T-cell (primary cell): ENCODE measurements at regions of chr5 and their contacts with region 1.

Region 1: DNA sequence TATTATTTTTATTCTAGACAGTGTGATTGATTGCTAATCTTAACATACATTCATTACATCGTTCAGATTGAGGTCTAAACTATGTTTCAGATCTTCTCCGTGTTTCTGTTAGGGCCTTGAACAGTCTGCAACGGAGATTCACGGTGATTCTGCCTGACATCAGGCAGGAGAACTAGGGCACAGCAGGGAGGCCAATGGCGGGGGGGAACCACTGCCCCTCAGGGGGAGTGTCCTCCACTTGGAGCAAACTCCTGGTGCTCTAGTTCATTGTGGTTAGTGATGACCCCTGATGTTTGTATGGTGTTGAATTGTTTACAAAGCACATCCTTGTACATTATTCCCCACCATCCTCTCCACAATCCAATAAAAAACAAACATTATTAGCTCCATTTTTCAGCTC is 173.5 kb downstream of the ZNF608 start:
- DNase-seq: no peak
- ATAC-seq: no peak
- H3K4me3 ChIP-seq: no peak overlapping the region
- H3K4me3 Mint-ChIP-seq: no peak overlapping the region
- H3K27ac ChIP-seq: no peak overlapping the region
- H3K27ac Mint-ChIP-seq: no peak overlapping the region
- H3K4me1 ChIP-seq: no peaks in the 10 kb centered on the region
- H3K4me1 Mint-ChIP-seq: no peaks in the 10 kb centered on the region
- H3K27me3 ChIP-seq: no peaks in the 10 kb centered on the region
- H3K27me3 Mint-ChIP-seq: peaks cover 0 to 5% of the 10 kb centered on the region in 2 donors

Region 2: DNA sequence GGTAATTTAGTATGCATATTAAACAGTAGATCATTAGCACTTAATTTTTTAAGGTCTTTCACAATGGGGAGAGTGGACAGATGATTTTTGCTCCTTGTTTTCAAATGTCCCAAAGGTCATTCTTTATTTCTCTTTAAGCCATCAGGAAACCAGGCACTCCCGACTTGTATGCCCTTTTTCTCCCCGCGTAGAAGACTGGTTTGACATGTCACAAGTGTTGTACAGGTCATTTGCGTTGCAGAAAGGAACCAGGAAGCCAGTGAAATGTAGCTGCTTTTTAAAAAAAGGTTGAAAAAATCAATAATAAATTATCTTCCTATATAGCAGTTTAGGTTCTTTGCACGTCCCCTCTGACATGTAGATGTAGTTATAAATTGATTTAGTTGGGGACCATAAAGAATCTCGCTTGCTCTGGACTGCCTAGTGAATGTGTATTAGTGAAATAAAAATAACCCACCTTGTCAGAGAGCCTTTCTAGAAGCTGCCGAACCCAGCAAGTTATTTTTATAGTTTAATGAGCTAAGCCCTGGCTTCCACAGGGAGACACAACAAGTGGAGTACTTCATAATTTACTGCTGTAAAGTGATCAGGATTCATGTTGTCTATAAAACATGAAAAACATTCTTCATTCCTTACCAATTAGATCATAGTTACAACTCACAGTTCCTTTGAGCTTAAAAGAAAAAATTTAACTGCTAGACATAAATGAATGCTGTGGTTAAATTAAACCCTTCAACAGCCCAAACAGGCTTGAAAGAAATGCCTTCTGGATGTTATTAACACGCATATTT is 656.4 kb before region 1 on chr5:
- CTCF ChIA-PET with region 1: no interaction called
- POLR2A ChIA-PET with region 1: interaction called in 1 of 2 experiments, 11 read pairs
- DNase-seq: no peak
- ATAC-seq: no peak
- H3K4me3 ChIP-seq: no peak overlapping the region
- H3K4me3 Mint-ChIP-seq: no peak overlapping the region
- H3K27ac ChIP-seq: no peak overlapping the region
- H3K27ac Mint-ChIP-seq: no peak overlapping the region
- H3K4me1 ChIP-seq: no peaks in the 10 kb centered on the region
- H3K4me1 Mint-ChIP-seq: no peaks in the 10 kb centered on the region
- H3K27me3 ChIP-seq: no peaks in the 10 kb centered on the region
- H3K27me3 Mint-ChIP-seq: no peaks in the 10 kb centered on the region